MCF 10A (cell line): ENCODE measurements at regions of chrX and their contacts with region 1.

Region 1: DNA sequence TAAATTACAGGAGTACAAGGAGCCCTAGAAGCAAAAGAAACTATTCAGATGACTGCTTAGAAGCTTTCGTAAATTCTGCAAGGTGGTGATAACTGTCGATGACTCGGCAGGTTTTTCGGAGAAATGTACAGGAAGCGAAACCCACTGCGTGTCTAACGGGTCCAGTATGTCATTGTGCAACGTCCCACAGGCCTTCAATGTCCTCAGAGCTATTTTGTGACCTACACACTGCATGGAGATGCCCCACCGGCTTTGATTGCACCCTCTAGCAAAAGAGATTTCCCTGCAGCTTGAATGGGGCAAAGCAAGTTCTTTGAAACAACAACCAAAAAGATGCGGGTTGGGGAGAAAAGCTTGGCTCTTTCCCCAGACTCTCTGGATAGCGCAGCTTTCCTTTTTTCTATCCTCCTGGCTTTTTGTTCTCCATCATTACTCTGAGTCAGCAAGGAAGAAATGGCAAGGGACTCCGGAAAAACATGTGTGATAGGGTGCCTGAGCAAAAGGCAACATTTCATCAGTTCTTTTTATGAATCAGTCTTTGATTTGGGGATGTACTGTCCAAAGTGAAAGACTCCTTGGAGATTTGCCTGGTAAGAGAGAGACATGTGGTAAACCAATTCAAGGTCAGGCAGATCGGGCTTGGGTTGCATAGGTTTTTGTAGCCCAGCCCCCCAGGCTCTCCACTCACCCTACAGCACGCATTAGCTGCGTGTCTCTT is 112.0 kb upstream of the TBL1X start:
- DNase-seq: peak; percentile 78
- H3K4me3 Mint-ChIP-seq: peak overlapping the region; percentile 29
- H3K27ac Mint-ChIP-seq: peak overlapping the region; percentile 73
- H3K4me1 Mint-ChIP-seq: peaks cover 6% of the 10 kb centered on the region
- H3K27me3 Mint-ChIP-seq: peaks cover 32% of the 10 kb centered on the region
- CTCF ChIP-seq: no peak

Region 2: DNA sequence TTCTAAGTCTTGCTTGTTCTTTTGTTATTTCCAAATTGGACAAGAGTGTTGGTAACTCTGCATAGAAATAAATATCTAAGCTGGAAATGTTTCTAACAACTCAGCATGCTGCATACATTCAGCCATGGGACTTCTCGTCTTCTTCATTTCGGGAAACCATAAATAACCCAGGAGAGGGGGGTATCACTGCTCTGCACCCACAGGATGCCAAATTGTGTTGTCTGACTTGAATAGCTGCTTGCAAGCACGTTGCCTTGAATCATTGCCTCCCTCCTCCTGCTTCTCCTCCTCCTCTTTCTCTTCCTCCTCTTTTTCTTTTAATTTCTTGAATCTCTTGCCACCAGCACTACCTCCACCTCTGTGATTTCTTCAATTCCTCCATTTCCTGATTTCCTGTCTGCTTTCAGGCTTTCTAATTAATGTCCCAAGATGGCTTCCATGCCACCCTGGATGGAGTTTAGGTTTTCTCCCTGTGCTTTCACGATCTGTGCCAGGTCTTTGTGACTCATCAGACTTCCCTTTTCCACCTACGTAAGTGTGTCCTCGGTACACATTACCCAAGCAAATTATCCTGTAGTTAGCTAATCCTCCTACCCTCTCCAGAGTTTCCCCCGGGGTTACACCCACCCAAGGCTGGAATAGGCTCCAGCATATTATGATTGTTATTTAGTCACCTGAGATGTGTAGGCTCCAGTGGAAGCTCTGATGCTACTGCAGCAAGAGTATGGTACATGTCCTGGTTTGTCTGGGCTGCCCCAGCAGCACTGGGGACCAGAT is 1010.9 kb before region 1 on chrX:
- CTCF ChIA-PET with region 1: no interaction called
- POLR2A ChIA-PET with region 1: no interaction called
- intact Hi-C with region 1: no loop called
- DNase-seq: peak; percentile 86
- H3K4me3 Mint-ChIP-seq: no peak overlapping the region
- H3K27ac Mint-ChIP-seq: peak overlapping the region; percentile 96
- H3K4me1 Mint-ChIP-seq: peaks cover 12% of the 10 kb centered on the region
- H3K27me3 Mint-ChIP-seq: no peaks in the 10 kb centered on the region
- CTCF ChIP-seq: no peak

Region 3: GRCh38 chrX:8868906-8869305 is 483.9 kb before region 1 on chrX:
- CTCF ChIA-PET with region 1: no interaction called
- POLR2A ChIA-PET with region 1: interaction called, 3 read pairs
- intact Hi-C with region 1: loop called (anchors 2 kb)
- DNase-seq: peak; percentile 34
- H3K4me3 Mint-ChIP-seq: no peak overlapping the region
- H3K27ac Mint-ChIP-seq: no peak overlapping the region
- H3K4me1 Mint-ChIP-seq: peaks cover 9% of the 10 kb centered on the region
- H3K27me3 Mint-ChIP-seq: no peaks in the 10 kb centered on the region
- CTCF ChIP-seq: no peak

Region 4: DNA sequence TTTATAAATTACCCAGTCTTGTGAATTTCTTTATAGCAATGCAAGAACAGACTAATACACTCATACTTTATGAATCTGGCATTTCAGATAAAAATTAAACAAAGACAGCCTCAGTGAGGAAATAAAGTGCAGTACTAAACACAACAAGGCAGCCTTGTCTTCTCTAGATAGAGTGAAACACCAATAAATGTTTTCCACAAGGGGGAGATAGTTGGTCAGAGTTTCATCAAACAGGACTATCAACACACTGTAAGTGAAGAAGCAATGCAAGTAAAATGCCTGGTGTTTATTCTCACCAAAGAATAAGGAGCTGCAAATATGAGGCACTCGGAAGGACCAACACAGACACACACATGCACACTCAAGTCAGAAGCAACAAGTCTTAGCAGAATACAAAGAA is 381.7 kb before region 1 on chrX:
- CTCF ChIA-PET with region 1: interaction called, 4 read pairs
- POLR2A ChIA-PET with region 1: no interaction called
- intact Hi-C with region 1: loop called (anchors 1 kb)
- DNase-seq: peak; percentile 67
- H3K4me3 Mint-ChIP-seq: no peak overlapping the region
- H3K27ac Mint-ChIP-seq: no peak overlapping the region
- H3K4me1 Mint-ChIP-seq: no peaks in the 10 kb centered on the region
- H3K27me3 Mint-ChIP-seq: no peaks in the 10 kb centered on the region
- CTCF ChIP-seq: peak; percentile 31

Region 5: DNA sequence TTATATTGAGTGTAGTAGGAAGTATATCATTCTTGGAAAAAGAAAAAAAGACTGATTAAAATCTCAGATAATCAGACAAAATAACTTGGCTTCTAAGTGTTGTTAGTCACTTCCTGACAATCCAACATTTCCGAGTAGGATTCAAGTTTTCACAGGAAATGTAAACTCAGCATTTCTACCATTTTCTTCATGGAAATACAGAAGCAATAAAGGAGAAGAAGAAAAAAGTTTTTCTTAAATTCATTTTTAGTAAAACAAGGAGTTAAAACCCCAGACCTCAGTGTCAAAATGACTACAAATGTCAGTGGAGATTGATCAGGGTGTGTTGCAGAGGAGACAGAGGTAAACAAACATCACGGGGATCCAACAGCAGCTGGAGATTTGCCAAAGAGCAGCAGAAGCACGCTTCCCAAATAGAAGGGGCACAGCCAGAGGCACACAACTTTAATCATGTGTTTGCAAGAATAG is 189.6 kb before region 1 on chrX:
- CTCF ChIA-PET with region 1: no interaction called
- POLR2A ChIA-PET with region 1: interaction called, 4 read pairs
- intact Hi-C with region 1: loop called (anchors 5 kb)
- DNase-seq: peak; percentile 49
- H3K4me3 Mint-ChIP-seq: peak overlapping the region; percentile 64
- H3K27ac Mint-ChIP-seq: peak overlapping the region; percentile 44
- H3K4me1 Mint-ChIP-seq: peaks cover 10% of the 10 kb centered on the region
- H3K27me3 Mint-ChIP-seq: no peaks in the 10 kb centered on the region
- CTCF ChIP-seq: no peak

Region 6: DNA sequence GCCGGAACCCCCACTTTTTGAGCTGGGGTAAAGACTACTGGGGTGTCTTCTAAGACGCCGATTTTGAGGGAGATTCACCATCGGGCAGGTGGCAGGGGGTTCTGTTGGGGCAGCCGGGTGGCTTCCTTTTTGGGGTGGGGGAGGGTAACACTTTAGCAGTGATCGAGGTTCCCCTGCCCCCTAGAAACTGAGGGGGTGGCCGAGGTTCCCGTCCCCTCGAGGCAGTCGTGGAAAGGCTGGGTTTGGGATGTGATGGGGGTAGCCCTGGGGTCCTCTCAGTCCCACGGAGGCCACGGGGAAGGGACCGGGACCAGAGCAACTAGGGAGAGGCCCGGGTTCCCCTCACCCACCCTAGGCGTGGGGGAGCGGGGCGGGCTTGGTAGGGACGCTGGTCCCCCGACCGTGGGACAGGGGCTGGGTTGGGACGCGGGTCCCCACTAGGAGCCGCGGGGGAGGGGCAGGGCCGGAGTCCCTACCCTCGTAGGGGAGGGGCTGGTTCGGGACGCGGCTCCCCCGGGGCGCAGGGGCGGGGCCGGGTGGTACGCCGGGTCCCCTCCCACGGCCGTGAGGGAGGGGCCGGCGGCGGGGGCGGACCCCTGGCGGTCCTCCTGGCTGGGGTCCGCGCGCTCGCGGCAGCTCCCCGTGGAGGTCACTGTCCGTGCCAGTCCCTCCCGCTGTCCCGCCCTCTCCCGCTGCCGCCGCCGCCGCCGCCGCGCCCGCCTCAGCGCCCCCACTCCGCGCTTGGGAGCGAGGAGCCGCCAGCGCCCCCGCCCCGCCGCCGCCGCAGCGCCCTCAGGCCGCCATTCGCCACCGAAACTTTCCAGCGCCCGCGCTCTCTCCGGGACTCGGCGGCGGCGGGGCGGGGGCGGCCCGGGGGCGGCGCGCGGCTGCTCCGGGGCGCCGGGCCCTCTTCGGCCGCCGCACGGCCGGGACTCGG is 111.8 kb after region 1 on chrX and contains the start of gene TBL1X:
- CTCF ChIA-PET with region 1: interaction called, 3 read pairs
- POLR2A ChIA-PET with region 1: interaction called, 3 read pairs
- intact Hi-C with region 1: loop called (anchors 2 kb)
- DNase-seq: no peak
- H3K4me3 Mint-ChIP-seq: peak within 1 kb of the TSS; percentile 57
- H3K27ac Mint-ChIP-seq: no peak within 1 kb of the TSS
- H3K4me1 Mint-ChIP-seq: peaks cover 14% of the 10 kb centered on the region
- H3K27me3 Mint-ChIP-seq: no peaks in the 10 kb centered on the region
- CTCF ChIP-seq: no peak
- total RNA-seq, gene TBL1X: 15.0 and 21.7 TPM in 2 replicates

Region 7: GRCh38 chrX:9566150-9566621 is 213.3 kb after region 1 on chrX:
- CTCF ChIA-PET with region 1: no interaction called
- POLR2A ChIA-PET with region 1: no interaction called
- intact Hi-C with region 1: loop called (anchors 10 kb)
- DNase-seq: peak; percentile 92
- H3K4me3 Mint-ChIP-seq: peak overlapping the region; percentile 28
- H3K27ac Mint-ChIP-seq: no peak overlapping the region
- H3K4me1 Mint-ChIP-seq: peaks cover 20% of the 10 kb centered on the region
- H3K27me3 Mint-ChIP-seq: no peaks in the 10 kb centered on the region
- CTCF ChIP-seq: no peak